Ovary (tissue), 10 donors: ENCODE measurements at regions of chr14 and their contacts with region 1.

Region 1: GRCh38 chr14:81315341-81315740 is 84.8 kb downstream of the STON2 start:
- DNase-seq: no peak
- H3K4me3 ChIP-seq: no peak overlapping the region
- H3K27ac ChIP-seq: no peak overlapping the region
- H3K4me1 ChIP-seq: peaks cover 5% of the 10 kb centered on the region
- H3K27me3 ChIP-seq: no peaks in the 10 kb centered on the region
- CTCF ChIP-seq: no peak
- EP300 ChIP-seq: no peak
- POLR2A ChIP-seq: no peak

Region 2: DNA sequence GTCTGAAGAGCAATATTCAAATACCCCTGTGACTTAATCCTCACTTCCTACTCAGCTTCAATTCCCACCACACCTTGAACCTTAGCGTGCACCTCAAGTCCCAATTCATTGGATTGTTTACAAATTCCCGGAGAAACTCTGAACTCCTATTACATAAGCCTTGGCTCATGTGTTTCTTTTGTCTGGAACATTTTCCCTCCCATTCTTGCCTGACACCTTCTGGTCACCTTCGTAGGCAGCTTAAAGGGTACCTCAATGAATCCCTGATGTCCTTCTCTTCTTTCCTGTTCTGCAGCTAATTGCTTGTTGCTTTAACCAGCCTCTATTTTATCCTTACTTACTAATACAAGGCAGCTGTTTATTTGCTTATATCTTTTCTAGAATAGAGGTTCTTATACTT is 303.4 kb after region 1 on chr14:
- intact Hi-C with region 1: loop called in 1 of 4 experiments (anchors 5 kb)
- DNase-seq: no peak
- H3K4me3 ChIP-seq: no peak overlapping the region
- H3K27ac ChIP-seq: no peak overlapping the region
- H3K4me1 ChIP-seq: no peaks in the 10 kb centered on the region
- H3K27me3 ChIP-seq: no peaks in the 10 kb centered on the region
- CTCF ChIP-seq: no peak
- EP300 ChIP-seq: no peak
- POLR2A ChIP-seq: no peak